Lower leg skin (tissue), 4 donors: ENCODE measurements at regions of chr6 and their contacts with region 1.

Region 1: GRCh38 chr6:94785514-94785913 is 791.8 kb upstream of the MANEA start:
- DNase-seq: no peak
- H3K4me3 ChIP-seq: no peak overlapping the region
- CTCF ChIP-seq: no peak
- POLR2A ChIP-seq: no peak

Region 2: DNA sequence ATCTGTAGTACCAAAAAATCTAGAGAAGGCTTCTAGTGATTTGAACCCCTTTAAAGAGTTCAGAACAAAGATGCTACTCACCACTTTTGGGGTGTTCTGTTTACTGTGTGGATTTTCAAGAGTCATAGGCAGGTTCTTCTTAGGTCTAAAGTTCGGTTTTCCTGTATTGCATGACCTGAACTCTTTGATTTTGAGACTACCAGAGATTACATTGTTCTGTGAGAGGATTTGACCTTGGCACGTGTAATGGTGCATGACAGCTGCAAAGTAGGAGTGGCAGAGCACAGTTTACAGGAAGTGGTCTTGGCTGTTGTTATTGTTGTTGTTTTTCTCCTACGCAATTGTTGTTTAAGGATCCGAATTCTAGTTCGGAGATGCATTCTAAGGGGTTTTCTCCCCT is 1958.9 kb before region 1 on chr6:
- intact Hi-C with region 1: loop called (anchors 10 kb)
- DNase-seq: no peak
- H3K4me3 ChIP-seq: no peak overlapping the region
- CTCF ChIP-seq: no peak
- POLR2A ChIP-seq: no peak

Region 3: GRCh38 chr6:94713446-94713845 is 72.1 kb before region 1 on chr6:
- intact Hi-C with region 1: no loop called
- DNase-seq: no peak
- H3K4me3 ChIP-seq: no peak overlapping the region
- CTCF ChIP-seq: no peak
- POLR2A ChIP-seq: no peak

Region 4: GRCh38 chr6:94727710-94728109 is 57.8 kb before region 1 on chr6:
- intact Hi-C with region 1: no loop called
- DNase-seq: no peak
- H3K4me3 ChIP-seq: no peak overlapping the region
- CTCF ChIP-seq: no peak
- POLR2A ChIP-seq: no peak

Region 5: GRCh38 chr6:95185874-95186273 is 400.4 kb after region 1 on chr6:
- intact Hi-C with region 1: loop called (anchors 10 kb)
- DNase-seq: no peak
- H3K4me3 ChIP-seq: no peak overlapping the region
- CTCF ChIP-seq: no peak
- POLR2A ChIP-seq: no peak